ENCODE measurements at regions of chr4 and their contacts with region 1.

Region 1: GRCh38 chr4:94451695-94452475 is at the start of gene PDLIM5:
- DNase-seq: peak; percentile 92 to 95
- ATAC-seq: peak; percentile 84 to 93 (median 87)
- H3K4me3 ChIP-seq: peak within 1 kb of the TSS; percentile 97
- H3K27ac ChIP-seq: peak within 1 kb of the TSS; percentile 99
- H3K4me1 ChIP-seq: peaks cover 21% of the 10 kb centered on the region
- H3K27me3 ChIP-seq: no peaks in the 10 kb centered on the region
- CTCF ChIP-seq: no peak
- total RNA-seq, gene PDLIM5: 459 to 840 (median 509) TPM

Region 2: GRCh38 chr4:94406668-94407437 is 45.0 kb before region 1 on chr4:
- intact Hi-C with region 1: loop called (anchors 1 to 2 kb)
- DNase-seq: peak; percentile 62 to 63
- ATAC-seq: peak; percentile 41 to 60 (median 54)
- H3K4me3 ChIP-seq: peak overlapping the region; percentile 44
- H3K27ac ChIP-seq: peak overlapping the region; percentile 90
- H3K4me1 ChIP-seq: peaks cover 13% of the 10 kb centered on the region
- H3K27me3 ChIP-seq: no peaks in the 10 kb centered on the region
- CTCF ChIP-seq: peak; percentile 94

Region 3: DNA sequence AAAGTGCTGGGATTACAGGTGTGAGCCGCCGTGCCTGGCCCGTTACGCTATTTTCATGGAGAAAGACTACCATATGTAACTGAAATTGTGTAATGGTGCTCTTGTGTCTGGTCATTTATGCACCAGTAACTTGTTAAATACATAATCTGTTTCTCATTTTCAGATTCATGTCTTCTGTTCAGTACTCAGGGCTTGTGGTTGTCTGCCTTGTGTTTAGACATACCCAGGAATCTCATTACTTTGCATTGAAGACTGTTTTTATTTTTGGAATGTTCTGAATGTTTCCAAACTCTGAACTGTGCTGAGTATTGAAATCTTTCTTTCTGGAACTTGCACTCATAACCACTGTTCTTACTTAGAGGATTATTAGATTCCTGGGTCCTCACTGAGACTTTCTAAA is 52.7 kb after region 1 on chr4:
- intact Hi-C with region 1: loop called in 1 of 2 experiments (anchors 5 kb)
- DNase-seq: no peak
- ATAC-seq: no peak
- H3K4me3 ChIP-seq: no peak overlapping the region
- H3K27ac ChIP-seq: peak overlapping the region; percentile 78
- H3K4me1 ChIP-seq: peaks cover 87% of the 10 kb centered on the region
- H3K27me3 ChIP-seq: no peaks in the 10 kb centered on the region
- CTCF ChIP-seq: no peak

Region 4: DNA sequence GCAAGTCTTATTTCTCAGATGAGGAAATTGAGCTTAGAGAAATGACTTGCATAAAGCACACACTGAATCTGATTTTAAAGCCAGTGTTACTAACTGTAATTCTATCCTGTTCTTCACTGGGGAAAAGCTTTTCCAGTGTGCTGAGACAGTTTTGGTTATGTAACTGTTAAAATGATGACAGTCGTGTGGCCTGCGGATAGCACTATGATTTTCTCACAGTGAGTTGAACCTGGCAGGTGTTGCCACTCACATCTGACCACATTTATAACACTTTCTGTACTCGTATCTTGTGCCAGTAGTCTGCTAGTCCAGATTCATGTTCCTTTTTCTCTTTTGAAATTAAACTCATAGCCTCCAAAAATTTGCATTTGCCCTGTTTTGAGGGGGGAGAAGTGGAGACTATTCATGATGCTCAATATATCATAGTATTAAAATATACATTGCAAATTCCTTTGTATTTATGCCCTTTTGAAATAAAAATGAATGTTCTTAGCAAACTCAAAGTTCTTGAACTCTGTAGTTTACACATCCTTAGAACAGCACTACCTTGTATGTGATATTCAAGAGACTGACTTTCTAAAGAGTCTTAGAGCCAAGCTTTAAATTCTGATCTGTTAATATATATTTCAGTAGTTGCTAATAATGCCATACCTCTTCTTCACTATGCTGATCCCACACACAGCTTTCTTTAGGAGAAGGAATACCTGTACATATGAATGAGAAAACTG is 132.2 kb after region 1 on chr4:
- intact Hi-C with region 1: loop called (anchors 5 kb)
- DNase-seq: no peak
- ATAC-seq: peak; percentile 73 to 84 (median 76)
- H3K4me3 ChIP-seq: no peak overlapping the region
- H3K27ac ChIP-seq: peak overlapping the region; percentile 68
- H3K4me1 ChIP-seq: peaks cover 47% of the 10 kb centered on the region
- H3K27me3 ChIP-seq: no peaks in the 10 kb centered on the region
- CTCF ChIP-seq: no peak

Region 5: DNA sequence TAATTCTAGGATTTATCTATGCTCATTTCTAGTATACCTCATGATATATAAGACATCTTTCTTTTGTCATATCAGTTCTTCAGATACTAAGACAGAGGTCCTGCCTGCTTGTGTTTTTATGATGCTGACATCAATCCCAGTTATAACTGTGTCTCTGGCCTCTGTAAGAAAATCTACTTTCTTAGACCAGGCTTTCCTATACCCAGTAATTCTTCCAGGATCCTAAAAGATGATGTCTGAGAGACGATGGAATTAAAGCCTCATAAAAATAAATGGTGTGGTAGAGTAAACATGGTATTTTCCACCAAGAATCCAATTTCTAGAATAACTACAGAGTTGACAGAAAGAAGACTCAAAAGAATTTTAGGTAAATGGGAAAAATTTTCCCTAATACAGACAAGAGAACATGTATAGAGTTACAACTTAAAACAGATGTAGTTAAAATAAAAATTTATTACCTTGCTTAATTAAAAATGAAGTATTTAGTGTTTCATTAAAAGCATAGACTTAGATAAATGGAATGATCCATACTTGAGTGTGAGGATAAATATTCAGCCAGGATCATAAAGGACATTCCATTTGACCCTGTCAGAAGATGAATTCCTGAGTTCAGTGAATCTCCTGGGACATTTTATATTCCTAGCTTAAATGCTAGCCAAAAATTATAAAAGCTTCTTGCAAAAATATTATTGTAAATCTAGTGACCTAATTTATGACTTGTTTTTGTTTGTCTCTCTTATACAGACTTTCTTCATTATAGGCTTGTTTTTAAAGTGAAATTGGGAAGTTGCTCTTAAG is 137.2 kb after region 1 on chr4:
- intact Hi-C with region 1: loop called (anchors 5 kb)
- DNase-seq: no peak
- ATAC-seq: no peak
- H3K4me3 ChIP-seq: no peak overlapping the region
- H3K27ac ChIP-seq: peak overlapping the region; percentile 12
- H3K4me1 ChIP-seq: peaks cover 17% of the 10 kb centered on the region
- H3K27me3 ChIP-seq: no peaks in the 10 kb centered on the region
- CTCF ChIP-seq: no peak

Region 6: GRCh38 chr4:95220205-95221175 is 768.6 kb after region 1 on chr4:
- intact Hi-C with region 1: no loop called
- DNase-seq: no peak
- ATAC-seq: no peak
- H3K4me3 ChIP-seq: no peak overlapping the region
- H3K27ac ChIP-seq: no peak overlapping the region
- H3K4me1 ChIP-seq: no peaks in the 10 kb centered on the region
- H3K27me3 ChIP-seq: no peaks in the 10 kb centered on the region
- CTCF ChIP-seq: no peak